ENCODE measurements at regions of chr17 and their contacts with region 1.

Region 1: DNA sequence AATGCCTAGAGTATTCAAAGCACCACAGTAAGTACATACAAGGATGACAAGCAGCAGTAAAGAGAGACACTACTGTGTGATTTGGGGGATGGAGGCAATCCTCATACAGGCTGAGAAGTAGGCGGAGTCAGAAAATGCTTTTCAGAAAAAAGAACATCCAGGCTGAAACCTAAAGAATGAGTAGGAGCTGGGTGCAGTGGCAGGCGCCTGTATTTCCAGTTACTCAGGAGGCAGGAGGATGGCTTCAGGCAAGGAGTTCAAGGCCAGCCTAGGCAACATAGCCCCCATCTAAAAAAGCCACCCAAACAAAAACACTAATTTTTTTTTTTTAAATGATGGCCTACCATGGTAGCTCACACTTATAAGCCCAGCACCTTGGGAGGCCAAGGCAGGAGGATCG is 10.3 kb downstream of the KANSL1 start:
- H3K4me3 Mint-ChIP-seq: no peak overlapping the region
- H3K27ac Mint-ChIP-seq: peak overlapping the region; percentile 75
- H3K4me1 Mint-ChIP-seq: peaks cover 94% of the 10 kb centered on the region
- H3K27me3 Mint-ChIP-seq: no peaks in the 10 kb centered on the region

Region 2: DNA sequence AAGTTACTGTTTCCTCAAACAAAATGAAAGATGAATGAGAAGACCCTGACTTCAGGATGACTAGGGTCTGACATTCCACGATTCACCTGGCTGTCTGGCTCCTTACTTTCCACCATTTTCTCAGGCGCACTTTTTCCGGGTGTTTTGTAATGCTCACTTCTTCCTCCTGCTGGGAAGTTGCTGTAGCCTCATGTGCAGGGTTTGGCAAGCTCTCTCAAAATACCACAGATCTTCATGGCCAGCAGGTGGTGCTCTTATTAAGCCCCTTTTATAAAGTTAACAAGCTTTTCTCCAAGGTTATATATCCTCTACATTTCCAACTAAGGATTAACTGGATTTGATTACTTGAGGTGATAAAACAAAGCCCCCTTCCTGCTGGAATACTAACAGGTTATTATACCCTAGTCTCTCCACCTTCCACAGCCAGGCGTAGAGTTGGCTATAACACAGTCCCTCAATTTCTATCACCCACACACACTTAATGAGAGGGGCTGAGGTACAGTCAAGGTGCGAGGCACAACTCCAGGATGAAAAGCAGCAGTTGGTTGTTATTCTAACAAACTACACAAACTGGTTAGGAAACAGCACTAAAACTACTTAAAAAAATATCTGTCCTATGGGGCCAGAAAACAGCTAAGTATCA is 138.6 kb before region 1 on chr17:
- intact Hi-C with region 1: loop called (anchors 10 kb)
- H3K4me3 Mint-ChIP-seq: no peak overlapping the region
- H3K27ac Mint-ChIP-seq: no peak overlapping the region
- H3K4me1 Mint-ChIP-seq: peaks cover 9% of the 10 kb centered on the region
- H3K27me3 Mint-ChIP-seq: no peaks in the 10 kb centered on the region

Region 3: DNA sequence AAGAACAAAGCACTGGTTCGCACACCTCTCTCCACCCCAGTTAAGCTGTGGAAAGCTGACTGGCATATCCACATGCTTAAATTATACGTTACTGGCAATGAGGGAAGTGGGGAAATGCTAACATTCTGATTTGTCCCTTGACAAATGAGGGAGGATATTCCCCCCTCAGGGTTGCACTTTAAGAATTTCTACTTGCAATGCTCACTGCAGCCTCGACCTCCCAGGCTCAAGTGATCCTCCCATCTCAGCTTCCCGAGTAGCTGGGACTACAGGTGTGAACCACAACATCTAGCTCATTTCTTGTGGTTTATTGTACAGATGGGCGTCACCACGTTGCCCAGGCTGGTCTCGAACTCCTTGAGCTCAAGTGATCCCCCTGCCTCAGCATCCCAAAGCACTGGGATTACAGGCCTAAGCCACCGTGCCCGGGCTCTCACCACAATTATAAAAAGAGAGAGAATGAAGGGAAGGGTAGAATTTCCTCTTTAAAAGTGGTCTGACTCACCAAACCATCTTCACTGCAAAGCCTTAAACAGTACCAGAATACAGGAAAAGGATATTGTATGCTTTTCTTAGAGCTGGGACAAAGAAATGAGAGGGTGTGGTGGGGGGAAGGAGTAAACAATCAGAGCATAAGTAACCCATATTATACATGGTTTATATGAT is 28.7 kb before region 1 on chr17:
- intact Hi-C with region 1: loop called (anchors 5 kb)
- H3K4me3 Mint-ChIP-seq: no peak overlapping the region
- H3K27ac Mint-ChIP-seq: peak overlapping the region; percentile 46
- H3K4me1 Mint-ChIP-seq: peaks cover 77% of the 10 kb centered on the region
- H3K27me3 Mint-ChIP-seq: no peaks in the 10 kb centered on the region